Heart right ventricle (tissue), 16 donors: ENCODE measurements at regions of chr17 and their contacts with region 1.

Region 1: GRCh38 chr17:31524926-31525800 is 133.7 kb downstream of the RAB11FIP4 start:
- DNase-seq: peak; percentile 83 to 87
- ATAC-seq: peak; percentile 76 to 92 (median 84)
- H3K4me3 ChIP-seq: no peak overlapping the region
- H3K27ac ChIP-seq: no peak overlapping the region
- H3K4me1 ChIP-seq: peaks cover 0 to 14% (median 4%) of the 10 kb centered on the region in 9 donors
- H3K27me3 ChIP-seq: no peaks in the 10 kb centered on the region
- CTCF ChIP-seq: peak; percentile 73 to 96 (median 89)

Region 2: DNA sequence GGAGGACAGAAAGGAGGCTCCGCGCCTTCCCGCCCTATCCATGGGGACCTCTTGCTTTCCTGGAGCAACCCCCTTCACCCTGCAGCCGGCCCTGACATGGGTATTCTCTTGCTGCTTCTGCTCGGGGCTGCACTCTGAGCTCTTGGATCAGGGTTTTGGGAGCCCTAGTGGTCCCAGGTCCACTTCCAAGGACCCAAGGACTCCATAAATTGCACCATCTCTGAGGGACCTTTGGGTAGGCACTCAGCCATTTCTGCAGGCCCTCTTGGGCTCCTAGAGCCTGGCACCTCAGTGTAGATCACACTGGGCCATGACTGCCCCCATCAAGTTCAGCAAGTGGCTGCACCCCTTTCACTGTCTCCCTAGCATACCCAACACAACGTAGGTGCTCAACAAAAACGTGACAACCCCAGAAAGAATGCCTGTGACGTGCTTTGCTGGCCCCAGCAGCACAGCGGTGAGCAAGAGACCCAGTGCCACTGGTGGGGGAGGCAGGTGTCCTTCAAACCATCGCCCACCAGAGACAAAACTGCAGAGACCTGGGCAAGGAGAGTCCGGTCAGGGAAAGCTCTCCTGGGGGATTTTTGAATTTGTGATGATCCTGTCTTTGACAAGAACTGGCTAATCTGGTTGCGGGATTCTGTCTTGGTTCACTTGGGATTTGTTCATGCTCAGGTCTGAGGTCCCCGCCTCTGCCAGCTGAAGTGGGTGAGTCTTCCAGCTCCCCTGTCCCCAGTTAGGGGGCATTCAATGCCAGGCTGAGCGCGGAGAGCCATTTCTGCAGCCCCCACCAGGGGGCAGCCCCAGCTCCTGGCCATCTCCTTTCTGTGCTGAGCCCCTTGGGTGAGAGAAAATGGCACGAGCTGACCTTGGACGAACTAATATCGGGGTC is 136.1 kb before region 1 on chr17:
- intact Hi-C with region 1: loop called in 3 of 10 experiments (anchors 1 to 5 kb)
- DNase-seq: peak in 1 of 2 donors; percentile 32
- ATAC-seq: peak in 5 of 8 donors; percentile 37 to 46 (median 41)
- H3K4me3 ChIP-seq: no peak overlapping the region
- H3K27ac ChIP-seq: no peak overlapping the region
- H3K4me1 ChIP-seq: peaks cover 0 to 17% (median 11%) of the 10 kb centered on the region in 9 donors
- H3K27me3 ChIP-seq: peaks cover 9 to 51% (median 39%) of the 10 kb centered on the region in 7 donors
- CTCF ChIP-seq: peak; percentile 33 to 77 (median 61)